ENCODE measurements at regions of chr22 and their contacts with region 1.

Region 1: DNA sequence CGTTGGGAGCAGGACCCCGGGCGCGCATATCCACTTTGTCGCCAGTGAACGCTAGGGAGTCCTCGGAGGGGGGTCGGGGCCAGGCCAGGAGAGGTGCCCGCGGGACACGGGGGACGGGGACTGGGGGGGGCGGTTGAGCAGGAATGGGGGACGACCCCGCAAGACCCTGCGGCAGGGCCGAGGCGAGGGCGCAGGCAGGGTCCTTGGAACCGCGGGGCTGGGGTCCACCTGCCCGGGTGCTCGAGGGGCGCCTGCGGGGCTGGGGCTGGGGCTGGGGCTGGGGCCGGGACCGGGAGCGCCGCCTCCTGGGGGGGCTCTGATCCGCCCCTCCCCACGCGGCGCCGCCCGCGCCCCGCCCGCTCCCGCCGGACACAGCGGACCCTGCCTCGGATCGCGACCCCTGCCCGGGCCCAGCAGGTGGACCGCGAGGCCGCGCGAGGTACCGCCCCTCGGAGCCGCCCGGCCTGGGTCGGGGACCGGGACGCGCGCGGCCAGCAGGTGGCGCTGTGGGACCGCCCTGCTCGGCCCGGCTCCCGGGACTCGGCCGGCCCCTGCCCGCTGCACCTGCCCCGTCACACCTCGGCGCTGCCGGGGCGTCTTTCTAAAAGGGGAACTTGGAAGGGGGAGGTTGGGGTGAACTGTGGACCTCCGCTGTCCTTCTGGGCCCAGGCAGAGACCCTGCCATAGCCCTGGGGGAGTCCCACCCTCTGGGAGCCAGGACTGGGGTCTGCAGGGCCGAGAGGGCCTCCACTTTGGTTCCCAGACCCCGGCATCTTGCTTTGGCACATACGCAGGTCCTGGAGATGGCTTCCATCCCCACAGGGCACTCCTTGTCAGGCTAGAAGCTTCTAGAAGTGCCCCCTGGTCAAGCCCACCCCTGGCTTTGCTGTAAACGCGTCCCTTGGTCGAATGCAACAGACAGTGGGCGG is 11.0 kb downstream of the CRELD2 start:
- DNase-seq: peak in 2 of 4 donors; percentile 60 to 96
- ATAC-seq: peak; percentile 62
- H3K4me3 ChIP-seq: no peak overlapping the region
- H3K27ac ChIP-seq: no peak overlapping the region
- H3K4me1 ChIP-seq: peaks cover 26 to 66% of the 10 kb centered on the region in 2 donors
- H3K27me3 ChIP-seq: peaks cover 0 to 9% of the 10 kb centered on the region in 2 donors
- CTCF ChIP-seq: peak; percentile 92 to 95

Region 2: DNA sequence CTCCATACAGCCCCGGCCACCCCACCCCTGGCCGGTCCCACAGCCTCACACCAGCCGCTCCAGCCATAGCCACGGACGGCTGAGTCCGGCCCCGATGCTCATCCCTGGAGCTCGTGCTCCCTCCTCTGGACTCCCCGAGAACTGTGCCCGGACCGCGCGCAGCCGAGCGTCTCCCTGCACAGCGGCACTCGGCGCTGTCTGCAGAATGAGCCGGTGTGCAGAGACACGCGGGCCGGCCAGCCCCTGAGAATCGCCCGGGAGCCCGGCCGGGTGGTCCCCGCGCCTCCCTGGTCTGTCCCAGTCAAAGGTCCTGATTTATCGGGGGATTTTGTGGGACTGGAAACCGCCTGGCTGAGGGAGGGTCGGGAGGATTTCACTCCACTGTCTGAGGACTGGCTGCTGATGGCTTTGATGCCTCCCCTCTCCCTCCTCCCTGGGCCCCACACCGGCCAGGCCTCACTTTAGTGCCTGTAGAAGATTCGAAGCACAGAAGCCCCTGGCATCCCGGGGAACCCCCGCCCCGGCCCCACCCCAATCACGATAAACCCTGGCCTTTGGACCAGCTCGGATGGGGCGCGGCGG is 204.5 kb before region 1 on chr22:
- intact Hi-C with region 1: no loop called
- DNase-seq: peak; percentile 14 to 83 (median 33)
- ATAC-seq: peak; percentile 93
- H3K4me3 ChIP-seq: peak overlapping the region; percentile 7 to 29
- H3K27ac ChIP-seq: peak overlapping the region in 1 of 2 donors; percentile 6
- H3K4me1 ChIP-seq: peaks cover 3 to 15% of the 10 kb centered on the region in 2 donors
- H3K27me3 ChIP-seq: peaks cover 16 to 70% of the 10 kb centered on the region in 2 donors
- CTCF ChIP-seq: peak; percentile 45 to 72

Region 3: DNA sequence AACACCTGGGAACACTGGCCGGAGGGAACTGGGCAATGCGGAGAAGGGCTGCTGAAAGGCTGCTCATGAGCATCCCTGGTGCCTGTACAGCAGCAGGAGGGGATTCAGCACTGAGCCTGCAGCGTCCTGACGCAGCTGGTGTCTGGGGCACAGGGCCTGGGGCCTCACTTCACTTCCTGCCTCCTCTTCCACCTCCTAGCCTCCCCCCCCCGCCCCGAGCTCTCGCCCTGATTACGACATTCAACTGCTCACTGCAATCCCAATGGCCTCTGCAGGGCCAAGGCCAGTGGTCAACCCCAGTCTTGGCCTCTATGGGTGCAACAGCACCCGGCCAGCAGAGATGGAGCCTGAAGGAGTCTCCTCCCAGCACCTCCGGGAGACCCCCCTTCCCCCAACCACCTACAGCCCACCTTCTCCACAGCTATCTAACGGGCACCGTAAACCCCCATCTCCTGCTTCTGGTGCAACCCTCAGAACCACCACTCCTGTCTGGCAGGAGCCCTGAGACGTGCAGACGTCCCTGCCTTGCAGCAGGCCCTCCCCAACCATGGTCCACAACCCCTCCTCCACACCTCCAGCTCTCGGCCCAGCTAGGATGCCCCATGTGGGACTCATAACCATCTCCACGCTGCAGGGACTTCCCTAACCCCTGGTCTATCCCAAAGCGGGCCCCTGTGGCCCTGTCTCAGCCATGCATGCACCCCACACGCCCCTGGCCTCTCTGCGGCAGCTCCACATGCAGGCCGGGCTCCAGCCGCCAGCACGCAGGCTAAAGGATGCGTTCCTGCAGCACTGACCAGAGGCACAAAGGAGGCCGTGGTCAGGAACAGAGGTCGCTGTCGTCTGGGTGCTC is 140.0 kb before region 1 on chr22:
- intact Hi-C with region 1: loop called in 1 of 2 experiments (anchors 10 kb)
- DNase-seq: peak in 2 of 4 donors; percentile 31 to 82
- ATAC-seq: peak; percentile 56
- H3K4me3 ChIP-seq: no peak overlapping the region
- H3K27ac ChIP-seq: peak overlapping the region; percentile 60 to 80
- H3K4me1 ChIP-seq: peaks cover 15 to 51% of the 10 kb centered on the region in 2 donors
- H3K27me3 ChIP-seq: no peaks in the 10 kb centered on the region
- CTCF ChIP-seq: no peak

Region 4: GRCh38 chr22:49966774-49967705 is 37.6 kb after region 1 on chr22:
- intact Hi-C with region 1: no loop called
- DNase-seq: peak in 2 of 4 donors; percentile 72 to 94
- ATAC-seq: no peak
- H3K4me3 ChIP-seq: peak overlapping the region in 1 of 2 donors; percentile 100
- H3K27ac ChIP-seq: peak overlapping the region; percentile 95 to 97
- H3K4me1 ChIP-seq: peaks cover 43 to 97% of the 10 kb centered on the region in 2 donors
- H3K27me3 ChIP-seq: peaks cover 0 to 4% of the 10 kb centered on the region in 2 donors
- CTCF ChIP-seq: no peak

Region 5: GRCh38 chr22:49979587-49980264 is 50.3 kb after region 1 on chr22:
- intact Hi-C with region 1: loop called in 1 of 2 experiments (anchors 10 kb)
- DNase-seq: no peak
- ATAC-seq: peak; percentile 66
- H3K4me3 ChIP-seq: no peak overlapping the region
- H3K27ac ChIP-seq: no peak overlapping the region
- H3K4me1 ChIP-seq: peaks cover 6 to 18% of the 10 kb centered on the region in 2 donors
- H3K27me3 ChIP-seq: peaks cover 14 to 28% of the 10 kb centered on the region in 2 donors
- CTCF ChIP-seq: peak; percentile 59 to 81

Region 6: GRCh38 chr22:49995041-49995360 is 65.5 kb after region 1 on chr22:
- intact Hi-C with region 1: no loop called
- DNase-seq: no peak
- ATAC-seq: no peak
- H3K4me3 ChIP-seq: no peak overlapping the region
- H3K27ac ChIP-seq: no peak overlapping the region
- H3K4me1 ChIP-seq: peaks cover 0 to 21% of the 10 kb centered on the region in 2 donors
- H3K27me3 ChIP-seq: peaks cover 3 to 4% of the 10 kb centered on the region in 2 donors
- CTCF ChIP-seq: no peak

Region 7: DNA sequence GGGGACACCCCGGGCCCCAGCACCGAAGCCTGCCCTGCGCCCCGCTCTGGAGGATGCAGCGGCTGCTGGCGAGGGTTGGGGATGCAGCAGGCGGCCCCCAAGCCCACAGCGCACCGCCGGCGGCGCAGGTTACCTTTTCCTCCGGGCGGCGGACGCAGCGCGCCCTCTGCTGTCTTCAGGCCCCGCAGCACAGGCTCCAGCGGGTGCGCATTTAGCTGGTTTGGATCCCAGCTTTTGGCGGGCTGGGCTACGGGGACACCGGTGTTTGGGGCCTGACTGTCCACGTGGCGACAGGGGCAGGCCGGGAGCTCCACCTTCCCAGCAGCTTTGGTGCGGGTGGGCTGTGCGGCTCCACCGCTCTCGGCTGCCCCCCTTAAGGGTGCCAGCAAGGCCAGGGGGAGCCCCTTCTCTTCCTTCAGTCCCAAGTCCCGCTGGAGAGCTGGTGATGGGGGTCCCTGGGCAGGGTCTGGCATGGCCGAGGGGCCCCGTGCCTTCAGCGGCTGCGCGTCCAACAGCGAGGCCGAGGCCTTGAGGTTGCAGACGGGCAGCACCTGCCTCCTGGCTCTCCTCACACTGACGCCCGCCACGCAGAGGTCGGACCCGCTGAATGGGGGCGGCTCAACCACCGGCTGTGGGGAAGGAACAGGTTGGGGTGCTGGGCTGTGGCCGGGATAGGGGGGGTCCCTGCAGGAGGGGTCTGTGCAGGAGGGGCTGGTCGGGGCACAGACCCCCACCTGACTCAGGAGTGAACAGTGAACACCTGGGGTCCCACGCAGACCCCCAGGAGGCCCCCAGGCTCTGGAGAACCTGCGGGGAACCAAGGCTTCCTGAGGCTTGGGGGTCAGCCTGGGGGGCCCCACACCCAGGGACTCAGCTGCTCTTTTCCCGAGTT is 101.1 kb after region 1 on chr22:
- intact Hi-C with region 1: loop called in 1 of 2 experiments (anchors 2 kb)
- DNase-seq: peak in 3 of 4 donors; percentile 70 to 95 (median 74)
- ATAC-seq: peak; percentile 96
- H3K4me3 ChIP-seq: no peak overlapping the region
- H3K27ac ChIP-seq: no peak overlapping the region
- H3K4me1 ChIP-seq: peaks cover 3 to 10% of the 10 kb centered on the region in 2 donors
- H3K27me3 ChIP-seq: peaks cover 0 to 78% of the 10 kb centered on the region in 2 donors
- CTCF ChIP-seq: peak; percentile 87 to 90

Measured in left lung (tissue), 14 donors.